PC-9 (cell line): ENCODE measurements at regions of chr2 and their contacts with region 1.

Region 1: DNA sequence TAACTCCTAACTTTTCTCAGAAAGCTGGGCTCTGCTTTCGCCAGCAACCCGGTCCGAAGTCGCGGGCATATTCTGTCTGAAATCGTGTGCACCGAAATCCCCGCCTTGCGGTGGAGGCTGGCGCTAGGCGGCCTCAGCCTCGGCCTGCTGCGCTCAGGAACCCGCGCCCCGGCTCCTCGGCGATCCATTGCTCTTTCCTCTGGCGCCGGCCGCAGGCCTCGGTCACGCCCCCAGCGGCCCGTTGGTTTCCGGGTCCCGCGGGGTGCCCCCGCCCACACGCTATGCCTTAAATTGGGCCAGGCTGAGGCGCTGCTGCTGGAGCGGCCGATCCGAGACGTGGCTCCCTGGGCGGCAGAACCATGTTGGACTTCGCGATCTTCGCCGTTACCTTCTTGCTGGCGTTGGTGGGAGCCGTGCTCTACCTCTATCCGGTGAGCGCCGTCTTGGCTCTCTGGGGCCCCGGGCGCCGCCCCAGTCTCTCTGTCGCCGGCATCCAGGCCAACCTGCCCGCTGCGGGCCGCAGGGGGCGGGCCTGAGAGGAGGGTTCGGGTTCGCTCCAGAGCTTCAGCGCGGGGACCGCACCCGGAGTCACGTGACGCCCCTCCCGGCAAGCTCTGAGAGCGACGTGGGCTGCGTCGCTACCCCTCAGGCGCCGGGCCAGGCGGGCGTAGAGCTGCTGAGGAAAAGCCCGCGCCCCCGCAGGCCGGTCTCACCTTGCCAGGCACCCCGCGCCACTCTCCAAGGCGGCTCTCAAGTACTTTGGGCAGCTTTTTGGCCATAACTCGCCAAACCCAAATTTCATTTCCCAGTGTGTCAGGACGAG is at the start of gene CYP20A1:
- DNase-seq: peak; percentile 78 to 93
- H3K4me3 ChIP-seq: peak within 1 kb of the TSS; percentile 97
- H3K27ac ChIP-seq: peak within 1 kb of the TSS; percentile 82
- H3K4me1 ChIP-seq: peaks cover 5% of the 10 kb centered on the region; the same call in 1 of the 2 replicates
- H3K27me3 ChIP-seq: no peaks in the 10 kb centered on the region
- CTCF ChIP-seq: no peak; the same call in 1 of the 2 replicates
- total RNA-seq, gene CYP20A1: 6.8 and 6.9 TPM in 2 replicates

Region 2: GRCh38 chr2:202831242-202832220 is 407.4 kb before region 1 on chr2:
- CTCF ChIA-PET with region 1: no interaction called
- POLR2A ChIA-PET with region 1: no interaction called
- intact Hi-C with region 1: no loop called
- DNase-seq: peak; percentile 29 to 47
- H3K4me3 ChIP-seq: no peak overlapping the region
- H3K27ac ChIP-seq: no peak overlapping the region
- H3K4me1 ChIP-seq: 0 out of 2 replicates have a peak, but pooled peaks cover 5% of the 10 kb centered on the region
- H3K27me3 ChIP-seq: no peaks in the 10 kb centered on the region
- CTCF ChIP-seq: peak; percentile 63

Region 3: GRCh38 chr2:202911512-202912341 is 327.2 kb before region 1 on chr2 and contains the starts of genes CARF and WDR12:
- CTCF ChIA-PET with region 1: no interaction called
- POLR2A ChIA-PET with region 1: no interaction called
- intact Hi-C with region 1: loop called (anchors 2 kb)
- DNase-seq: peak; percentile 75 to 76
- H3K4me3 ChIP-seq: peak within 1 kb of the TSS; percentile 96
- H3K27ac ChIP-seq: peak within 1 kb of the TSS; percentile 78
- H3K4me1 ChIP-seq: peaks cover 13% of the 10 kb centered on the region; the same call in 1 of the 2 replicates
- H3K27me3 ChIP-seq: no peaks in the 10 kb centered on the region
- CTCF ChIP-seq: no peak
- total RNA-seq, gene CARF: 5.9 and 6.5 TPM in 2 replicates
- total RNA-seq, gene WDR12: 38.7 and 45.3 TPM in 2 replicates